Right ventricle myocardium inferior (tissue), 1 donor: ENCODE measurements at regions of chr9 and their contacts with region 1.

Region 1: DNA sequence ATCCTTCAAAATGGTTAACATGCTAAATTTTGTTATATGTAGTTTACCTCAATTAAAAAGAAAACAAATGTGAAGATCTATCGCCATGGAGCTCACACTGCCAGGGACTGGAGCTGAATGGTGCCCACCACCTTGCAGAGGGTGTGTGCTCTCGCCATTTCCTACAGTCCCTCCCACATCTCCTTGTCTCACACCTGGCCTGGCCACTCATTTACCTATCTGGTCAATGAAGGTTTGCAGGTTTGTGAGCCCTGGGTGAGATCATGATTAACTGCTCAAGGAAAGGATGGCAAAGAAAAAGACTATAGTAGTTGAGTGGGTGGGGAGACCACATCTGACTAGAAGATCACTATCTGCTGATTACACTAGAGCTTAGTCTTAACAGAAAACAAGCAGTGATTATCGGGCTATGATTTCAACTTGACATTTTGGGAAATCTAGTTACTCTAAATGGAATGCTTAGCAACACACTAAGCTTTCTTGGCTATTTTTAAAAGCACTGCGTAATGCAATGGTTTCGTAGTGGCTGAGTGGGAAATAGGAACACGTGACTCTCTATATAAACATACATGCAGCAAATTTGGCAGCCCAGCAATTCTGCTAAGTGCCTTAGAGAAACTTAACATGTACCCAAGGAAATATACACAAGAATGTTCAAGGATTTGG is 27.3 kb downstream of the PUM3 start:
- DNase-seq: no peak
- ATAC-seq: peak; percentile 56

Region 2: DNA sequence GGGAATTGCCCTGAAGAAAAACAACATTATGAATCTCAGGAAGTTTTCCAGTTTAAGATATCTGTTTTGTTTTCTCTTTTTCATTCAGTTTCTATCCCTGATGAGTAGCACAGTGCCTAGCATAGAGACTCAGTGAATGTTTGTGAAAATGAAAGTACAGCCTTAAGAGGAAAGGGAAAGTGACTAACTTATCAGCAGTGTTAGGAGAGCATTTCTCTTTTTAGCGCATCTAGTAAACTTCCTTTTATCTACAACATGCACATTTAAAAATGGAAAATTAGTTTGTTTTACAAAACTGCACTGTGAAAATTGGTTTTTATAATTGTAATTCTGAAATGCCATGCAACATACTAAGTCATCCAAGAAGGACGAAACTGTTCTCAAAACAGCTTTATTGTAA is 690.7 kb before region 1 on chr9:
- intact Hi-C with region 1: loop called (anchors 5 kb)
- DNase-seq: no peak
- ATAC-seq: peak; percentile 56